Ovary (tissue), 10 donors: ENCODE measurements at regions of chr15 and their contacts with region 1.

Region 1: DNA sequence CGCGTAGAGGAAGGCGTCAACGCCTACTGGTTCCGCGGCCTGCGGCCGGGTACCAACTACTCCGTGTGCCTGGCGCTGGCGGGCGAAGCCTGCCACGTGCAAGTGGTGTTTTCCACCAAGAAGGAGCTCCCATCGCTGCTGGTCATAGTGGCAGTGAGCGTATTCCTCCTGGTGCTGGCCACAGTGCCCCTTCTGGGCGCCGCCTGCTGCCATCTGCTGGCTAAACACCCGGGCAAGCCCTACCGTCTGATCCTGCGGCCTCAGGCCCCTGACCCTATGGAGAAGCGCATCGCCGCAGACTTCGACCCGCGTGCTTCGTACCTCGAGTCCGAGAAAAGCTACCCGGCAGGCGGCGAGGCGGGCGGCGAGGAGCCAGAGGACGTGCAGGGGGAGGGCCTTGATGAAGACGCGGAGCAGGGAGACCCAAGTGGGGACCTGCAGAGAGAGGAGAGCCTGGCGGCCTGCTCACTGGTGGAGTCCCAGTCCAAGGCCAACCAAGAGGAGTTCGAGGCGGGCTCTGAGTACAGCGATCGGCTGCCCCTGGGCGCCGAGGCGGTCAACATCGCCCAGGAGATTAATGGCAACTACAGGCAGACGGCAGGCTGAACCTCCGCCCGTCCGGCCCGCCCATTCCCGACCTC is 4.1 kb downstream of the ISLR2 start:
- DNase-seq: peak in 2 of 5 donors; percentile 23 to 36
- H3K4me3 ChIP-seq: no peak overlapping the region
- H3K27ac ChIP-seq: no peak overlapping the region
- H3K4me1 ChIP-seq: peaks cover 9% of the 10 kb centered on the region
- H3K27me3 ChIP-seq: peaks cover 4% of the 10 kb centered on the region
- CTCF ChIP-seq: no peak
- EP300 ChIP-seq: no peak
- POLR2A ChIP-seq: no peak

Region 2: DNA sequence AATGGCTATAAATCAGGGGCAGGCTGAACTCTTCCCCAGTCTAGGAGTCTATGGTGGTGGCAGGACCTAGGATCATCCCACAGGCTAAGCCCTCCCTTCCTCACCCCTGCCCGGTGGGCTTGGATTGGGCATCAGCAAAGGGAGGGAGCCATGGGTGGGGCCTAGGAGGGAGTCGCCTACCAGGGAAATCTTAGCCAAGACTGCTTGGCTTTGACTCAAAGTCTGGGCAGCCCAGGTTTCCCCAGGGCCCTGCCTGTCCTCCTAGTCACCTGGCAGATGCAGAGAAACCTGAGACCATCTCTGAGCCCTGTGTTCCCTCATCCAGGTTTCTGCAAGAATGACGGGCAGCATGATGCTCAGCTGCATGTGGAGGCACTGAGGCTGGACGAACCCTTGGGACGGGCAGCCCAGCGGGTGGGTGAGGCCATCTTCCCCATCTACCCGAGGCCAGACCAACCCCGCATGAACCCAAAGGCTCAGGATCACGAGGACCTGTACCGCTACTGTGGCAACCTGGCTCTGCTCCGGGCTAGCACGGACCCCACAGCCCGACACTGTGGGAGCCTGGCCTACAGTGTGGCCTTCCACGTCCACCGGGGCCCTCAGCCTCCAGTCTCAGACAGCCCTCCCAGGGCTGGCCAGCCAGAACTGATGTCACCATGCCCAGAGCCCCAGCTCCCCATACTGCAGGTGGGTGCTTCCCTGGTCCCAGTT is 83.8 kb after region 1 on chr15:
- intact Hi-C with region 1: loop called in 1 of 4 experiments (anchors 5 kb)
- DNase-seq: no peak
- H3K4me3 ChIP-seq: no peak overlapping the region
- H3K27ac ChIP-seq: no peak overlapping the region
- H3K4me1 ChIP-seq: no peaks in the 10 kb centered on the region
- H3K27me3 ChIP-seq: no peaks in the 10 kb centered on the region
- CTCF ChIP-seq: no peak
- EP300 ChIP-seq: no peak
- POLR2A ChIP-seq: no peak